Aorta (tissue), 5 donors: ENCODE measurements at regions of chr18 and their contacts with region 1.

Region 1: GRCh38 chr18:23356915-23357601 is 96.0 kb upstream of the RIOK3 start:
- DNase-seq: no peak
- ATAC-seq: peak; percentile 65
- H3K4me3 ChIP-seq: no peak overlapping the region
- H3K27ac ChIP-seq: peak overlapping the region; percentile 10 to 99
- H3K4me1 ChIP-seq: peaks cover 10 to 11% of the 10 kb centered on the region in 2 donors
- H3K27me3 ChIP-seq: no peaks in the 10 kb centered on the region

Region 2: GRCh38 chr18:23231340-23232021 is 125.6 kb before region 1 on chr18:
- intact Hi-C with region 1: loop called (anchors 5 kb)
- DNase-seq: peak; percentile 86 to 89
- ATAC-seq: peak; percentile 90
- H3K4me3 ChIP-seq: no peak overlapping the region
- H3K27ac ChIP-seq: peak overlapping the region; percentile 88 to 99
- H3K4me1 ChIP-seq: peaks cover 3% of the 10 kb centered on the region in 2 donors
- H3K27me3 ChIP-seq: no peaks in the 10 kb centered on the region

Region 3: DNA sequence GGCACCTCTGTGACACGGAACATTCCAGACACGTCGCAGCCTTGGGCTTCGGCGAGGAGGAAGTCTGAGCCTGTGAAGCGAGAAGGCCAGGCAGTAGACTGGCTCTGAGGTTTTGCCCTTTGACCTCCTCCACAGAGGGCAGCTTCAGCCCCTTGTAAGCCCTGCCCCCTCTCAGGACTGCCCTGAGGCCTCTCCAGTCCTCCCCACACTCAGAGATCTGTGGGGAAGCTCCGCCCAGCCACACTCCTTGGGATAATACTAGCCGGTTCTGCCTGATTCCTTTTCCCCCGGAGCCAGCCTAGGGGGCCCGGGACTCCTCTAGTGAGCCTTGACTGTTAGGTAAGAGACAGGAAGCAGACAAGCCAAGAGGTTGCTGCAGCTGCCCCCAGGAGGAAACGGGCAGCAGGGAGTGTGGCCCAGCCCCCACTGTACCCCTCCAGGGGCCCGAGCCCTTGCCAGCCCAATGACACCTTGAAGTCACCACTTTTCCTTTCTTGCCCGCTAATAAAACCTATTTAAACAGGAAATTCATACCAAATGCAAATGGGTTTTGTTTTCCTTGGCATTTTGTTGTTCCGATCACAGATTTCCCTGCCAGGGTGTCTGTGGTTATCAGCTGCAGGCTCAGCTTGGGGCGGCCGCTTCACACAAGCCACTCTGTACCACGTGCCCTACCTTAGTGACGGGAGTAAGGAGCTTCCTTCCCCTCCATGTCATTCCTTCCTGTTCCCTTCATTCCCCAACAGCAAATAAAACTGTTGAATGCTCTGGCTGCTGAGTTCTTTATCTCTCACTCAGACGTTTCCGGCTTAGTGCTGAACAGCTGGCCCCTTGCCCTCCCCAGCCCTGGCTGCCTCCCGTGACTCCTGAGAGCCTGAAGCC is 97.1 kb before region 1 on chr18:
- intact Hi-C with region 1: loop called in 1 of 2 experiments (anchors 2 kb)
- DNase-seq: peak; percentile 91 to 93
- ATAC-seq: peak; percentile 81
- H3K4me3 ChIP-seq: no peak overlapping the region
- H3K27ac ChIP-seq: peak overlapping the region; percentile 64 to 84
- H3K4me1 ChIP-seq: no peaks in the 10 kb centered on the region
- H3K27me3 ChIP-seq: no peaks in the 10 kb centered on the region

Region 4: GRCh38 chr18:23307567-23308295 is 49.3 kb before region 1 on chr18:
- intact Hi-C with region 1: loop called in 1 of 2 experiments (anchors 2 kb)
- DNase-seq: no peak
- ATAC-seq: no peak
- H3K4me3 ChIP-seq: no peak overlapping the region
- H3K27ac ChIP-seq: no peak overlapping the region
- H3K4me1 ChIP-seq: no peaks in the 10 kb centered on the region
- H3K27me3 ChIP-seq: no peaks in the 10 kb centered on the region